Ascending aorta (tissue), 2 donors: ENCODE measurements at regions of chr6 and their contacts with region 1.

Region 1: GRCh38 chr6:89999154-89999553 is 104.9 kb downstream of the GJA10 start:
- DNase-seq: no peak
- H3K4me3 ChIP-seq: no peak overlapping the region
- H3K27ac ChIP-seq: peak overlapping the region in 1 of 2 donors; percentile 62
- H3K4me1 ChIP-seq: peaks cover 3 to 17% of the 10 kb centered on the region in 2 donors
- H3K27me3 ChIP-seq: no peaks in the 10 kb centered on the region
- CTCF ChIP-seq: no peak

Region 2: GRCh38 chr6:90369024-90369519 is 369.9 kb after region 1 on chr6:
- intact Hi-C with region 1: loop called (anchors 5 kb)
- DNase-seq: peak; percentile 22 to 91
- H3K4me3 ChIP-seq: no peak overlapping the region
- H3K27ac ChIP-seq: peak overlapping the region; percentile 63 to 65
- H3K4me1 ChIP-seq: peaks cover 5 to 8% of the 10 kb centered on the region in 2 donors
- H3K27me3 ChIP-seq: no peaks in the 10 kb centered on the region
- CTCF ChIP-seq: no peak